Heart left ventricle (tissue), 16 donors: ENCODE measurements at regions of chr11 and their contacts with region 1.

Region 1: GRCh38 chr11:65961232-65961901 is at the start of gene SART1:
- DNase-seq: peak; percentile 99
- ATAC-seq: peak; percentile 98 to 99 (median 98)
- H3K4me3 ChIP-seq: peak within 1 kb of the TSS; percentile 77 to 99 (median 92)
- H3K27ac ChIP-seq: peak within 1 kb of the TSS; percentile 57 to 96 (median 90)
- H3K4me1 ChIP-seq: peaks cover 3 to 28% (median 23%) of the 10 kb centered on the region in 12 donors
- H3K27me3 ChIP-seq: no peaks in the 10 kb centered on the region
- CTCF ChIP-seq: no peak
- POLR2A ChIP-seq: peak in 1 of 2 donors; percentile 81
- total RNA-seq, gene SART1: 21.6 to 57.2 (median 31.1) TPM

Region 2: GRCh38 chr11:65919146-65920033 is 42.0 kb before region 1 on chr11 and contains the start of gene DRAP1:
- intact Hi-C with region 1: loop called in 7 of 10 experiments (anchors 2 to 5 kb)
- DNase-seq: peak; percentile 99 to 100 (median 99)
- ATAC-seq: peak; percentile 92 to 96 (median 94)
- H3K4me3 ChIP-seq: peak within 1 kb of the TSS; percentile 85 to 100 (median 96)
- H3K27ac ChIP-seq: peak within 1 kb of the TSS; percentile 95 to 100 (median 97)
- H3K4me1 ChIP-seq: peaks cover 16 to 55% (median 48%) of the 10 kb centered on the region in 12 donors
- H3K27me3 ChIP-seq: no peaks in the 10 kb centered on the region
- CTCF ChIP-seq: peak in 2 of 12 donors; percentile 15 to 25
- POLR2A ChIP-seq: peak; percentile 38 to 79
- total RNA-seq, gene DRAP1: 76.5 to 144 (median 96.9) TPM

Region 3: GRCh38 chr11:66001942-66002647 is 40.7 kb after region 1 on chr11 and contains the starts of genes BANF1 and EIF1AD:
- intact Hi-C with region 1: loop called in 8 of 10 experiments (anchors 1 to 5 kb)
- DNase-seq: peak; percentile 93
- ATAC-seq: peak; percentile 87 to 95 (median 90)
- H3K4me3 ChIP-seq: peak within 1 kb of the TSS; percentile 68 to 98 (median 82)
- H3K27ac ChIP-seq: peak within 1 kb of the TSS; percentile 73 to 99 (median 94)
- H3K4me1 ChIP-seq: peaks cover 3 to 28% (median 24%) of the 10 kb centered on the region in 12 donors
- H3K27me3 ChIP-seq: no peaks in the 10 kb centered on the region
- CTCF ChIP-seq: peak in 1 of 12 donors; percentile 13
- POLR2A ChIP-seq: peak in 1 of 2 donors; percentile 50
- total RNA-seq, gene BANF1: 68.7 to 227 (median 187) TPM
- total RNA-seq, gene EIF1AD: 13.0 to 25.2 (median 20.7) TPM

Region 4: DNA sequence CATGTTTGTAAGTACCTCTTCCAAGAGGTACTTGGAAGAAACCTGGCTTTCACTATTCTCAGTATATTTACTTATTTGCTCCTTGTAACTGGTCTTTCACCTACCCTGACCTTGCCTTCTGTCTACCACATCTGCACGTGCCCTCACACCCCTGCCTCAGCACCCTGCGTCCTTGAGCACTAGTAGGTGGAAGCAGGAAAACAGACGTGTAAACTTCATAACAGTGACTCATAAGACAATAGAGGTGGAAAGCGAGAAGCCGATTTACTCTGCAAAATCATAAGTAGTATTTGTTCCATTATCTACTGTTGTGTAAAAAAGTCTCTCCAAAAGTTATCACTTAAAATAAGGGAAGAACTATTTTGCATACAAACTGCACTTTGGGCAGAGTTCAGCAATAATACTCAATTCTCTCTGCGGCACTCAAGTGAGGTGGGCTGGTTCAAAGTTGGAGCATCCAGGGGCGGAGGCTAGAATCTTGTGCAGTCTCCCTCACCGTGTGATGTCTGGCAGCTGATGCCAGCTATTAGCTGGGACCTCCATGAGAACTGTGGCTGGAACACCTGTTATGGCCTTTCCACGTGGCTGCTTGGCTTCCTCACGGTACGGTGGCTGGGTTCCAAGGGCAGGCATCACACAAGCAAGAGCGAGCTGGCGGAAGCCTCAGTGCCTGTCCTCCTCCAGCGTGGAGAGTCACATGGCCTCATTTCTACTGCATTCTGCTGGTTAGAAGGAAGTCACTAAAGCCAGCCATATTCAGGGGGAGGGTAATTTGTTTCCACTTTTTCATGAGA is 139.1 kb after region 1 on chr11:
- intact Hi-C with region 1: no loop called
- DNase-seq: peak; percentile 68 to 86 (median 78)
- ATAC-seq: peak; percentile 65 to 95 (median 90)
- H3K4me3 ChIP-seq: peak overlapping the region in 1 of 12 donors; percentile 39
- H3K27ac ChIP-seq: peak overlapping the region in 2 of 12 donors; percentile 9 to 67
- H3K4me1 ChIP-seq: peaks cover 0 to 46% (median 15%) of the 10 kb centered on the region in 12 donors
- H3K27me3 ChIP-seq: no peaks in the 10 kb centered on the region
- CTCF ChIP-seq: no peak
- POLR2A ChIP-seq: no peak

Region 5: DNA sequence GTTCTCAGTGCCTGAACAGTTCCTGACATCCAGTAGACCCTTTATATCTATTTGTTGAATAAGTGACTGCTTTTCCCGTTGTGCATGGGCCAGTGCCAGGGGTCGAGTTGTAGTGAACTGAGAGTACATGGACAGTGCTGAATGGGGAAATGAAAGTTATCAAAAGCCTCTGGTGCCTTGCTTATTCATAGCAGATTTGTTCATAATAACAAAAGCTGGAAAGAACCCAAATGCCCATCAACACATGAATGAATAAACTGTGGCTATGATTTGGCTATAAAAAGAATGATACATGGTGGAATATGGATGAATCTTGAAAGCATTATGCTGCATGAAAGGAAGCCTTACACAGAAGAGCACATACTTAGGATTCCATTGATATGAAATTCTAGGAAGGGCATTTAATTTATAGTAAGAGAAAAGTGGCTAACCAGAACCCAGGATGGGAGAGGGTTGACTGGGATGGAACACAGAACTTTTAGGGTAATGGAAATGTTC is 151.3 kb after region 1 on chr11:
- intact Hi-C with region 1: no loop called
- DNase-seq: peak in 2 of 5 donors; percentile 35
- ATAC-seq: peak; percentile 36 to 57 (median 46)
- H3K4me3 ChIP-seq: no peak overlapping the region
- H3K27ac ChIP-seq: peak overlapping the region in 8 of 12 donors; percentile 0 to 80 (median 14)
- H3K4me1 ChIP-seq: peaks cover 4 to 84% (median 32%) of the 10 kb centered on the region in 12 donors
- H3K27me3 ChIP-seq: no peaks in the 10 kb centered on the region
- CTCF ChIP-seq: no peak
- POLR2A ChIP-seq: no peak

Region 6: DNA sequence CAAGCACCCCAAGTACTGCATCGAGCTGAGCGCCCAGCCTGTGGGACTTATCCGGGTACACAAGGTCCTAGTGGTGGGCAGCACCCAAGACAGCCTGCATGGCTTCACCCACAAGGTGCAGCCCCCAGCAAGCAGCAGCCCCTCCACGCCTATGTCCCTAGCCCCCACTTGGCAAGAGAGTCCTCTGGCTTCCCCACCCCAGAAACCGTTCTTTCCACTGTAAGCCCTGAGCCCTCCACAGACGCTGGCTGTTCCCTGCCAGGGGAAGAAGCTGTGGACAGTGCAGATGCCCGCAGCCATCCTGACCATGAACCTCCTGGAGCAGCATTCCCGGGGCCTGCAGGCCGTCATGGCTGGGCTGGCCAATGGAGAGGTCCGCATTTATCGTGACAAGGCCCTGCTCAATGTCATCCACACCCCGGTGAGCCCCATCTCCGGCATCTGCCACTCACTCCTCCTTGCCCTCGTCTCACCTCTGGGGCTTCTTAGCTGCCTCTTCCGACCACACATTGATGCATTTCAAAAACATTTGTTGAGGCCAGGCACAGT is 562.2 kb after region 1 on chr11:
- intact Hi-C with region 1: no loop called
- DNase-seq: peak in 4 of 5 donors; percentile 69 to 83 (median 76)
- ATAC-seq: peak; percentile 81 to 97 (median 92)
- H3K4me3 ChIP-seq: no peak overlapping the region
- H3K27ac ChIP-seq: peak overlapping the region in 8 of 12 donors; percentile 2 to 48 (median 33)
- H3K4me1 ChIP-seq: peaks cover 0 to 18% (median 0%) of the 10 kb centered on the region in 12 donors
- H3K27me3 ChIP-seq: no peaks in the 10 kb centered on the region
- CTCF ChIP-seq: no peak
- POLR2A ChIP-seq: no peak